PC-9 (cell line): ENCODE measurements at regions of chr12 and their contacts with region 1.

Region 1: DNA sequence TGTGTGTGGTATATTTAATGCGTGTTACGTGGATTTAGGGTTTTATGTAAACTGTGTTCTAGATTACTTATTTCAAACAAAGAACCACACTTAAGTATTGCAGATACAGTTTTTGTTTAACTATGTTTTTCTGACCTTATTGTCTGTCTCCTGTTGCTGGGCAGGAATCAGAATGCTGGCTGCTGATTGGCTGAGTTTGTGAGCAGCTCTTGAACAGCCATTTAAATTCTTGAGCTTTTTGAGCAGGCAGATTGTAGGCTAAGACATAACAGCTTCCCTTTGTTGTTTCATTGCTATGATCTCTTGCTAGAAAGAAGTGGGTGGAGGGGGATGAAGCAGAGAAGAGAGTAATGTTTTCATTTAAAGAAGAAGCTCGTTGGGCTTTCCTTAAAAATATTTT is 52.2 kb downstream of the ATF7IP start:
- DNase-seq: peak in 1 of 2 experiments; percentile 61
- H3K4me3 ChIP-seq: no peak overlapping the region
- H3K27ac ChIP-seq: no peak overlapping the region
- H3K4me1 ChIP-seq: no peaks in the 10 kb centered on the region; the same call in 1 of the 2 replicates
- H3K27me3 ChIP-seq: no peaks in the 10 kb centered on the region
- CTCF ChIP-seq: no peak

Region 2: DNA sequence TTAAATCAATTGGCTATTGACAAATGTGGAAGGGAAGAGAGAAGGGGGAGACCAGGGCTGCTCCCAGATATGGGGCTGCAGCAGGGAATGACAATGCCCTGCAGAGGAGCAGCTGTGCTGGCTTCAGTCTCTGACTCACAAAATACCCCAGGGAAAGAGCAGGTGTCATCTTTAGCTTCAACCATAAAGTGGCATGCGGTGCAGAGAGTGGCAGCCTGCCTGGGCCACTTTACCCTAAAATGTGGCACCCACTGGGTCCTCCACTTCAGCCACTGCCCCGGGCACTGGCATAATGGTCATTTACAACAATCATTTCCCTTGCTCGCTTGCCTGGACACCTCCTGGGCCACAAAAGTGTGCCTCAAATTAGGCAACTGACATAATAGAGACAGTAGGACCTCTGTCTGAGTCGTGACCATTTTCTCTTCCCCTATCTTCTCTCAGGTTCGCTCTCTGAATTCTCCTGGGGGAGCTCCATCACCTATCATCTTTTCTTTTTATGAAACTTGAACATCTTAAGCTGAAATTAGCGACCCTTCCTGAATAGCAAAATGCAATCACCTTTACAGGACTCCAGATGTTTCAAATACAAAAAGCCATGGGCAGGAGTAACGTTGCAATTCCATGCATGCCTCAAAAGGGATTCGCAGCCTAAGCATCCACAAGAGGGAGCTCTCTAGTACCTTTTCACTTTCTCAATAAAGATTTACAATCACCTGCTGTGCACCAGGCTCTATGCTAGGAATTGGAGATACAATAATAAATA is 232.1 kb before region 1 on chr12:
- CTCF ChIA-PET with region 1: interaction called, 3 read pairs
- POLR2A ChIA-PET with region 1: no interaction called
- intact Hi-C with region 1: loop called (anchors 1 kb)
- DNase-seq: peak; percentile 39 to 48
- H3K4me3 ChIP-seq: no peak overlapping the region
- H3K27ac ChIP-seq: no peak overlapping the region
- H3K4me1 ChIP-seq: 0 out of 2 replicates have a peak, but pooled peaks cover 7% of the 10 kb centered on the region
- H3K27me3 ChIP-seq: no peaks in the 10 kb centered on the region
- CTCF ChIP-seq: peak; percentile 83

Region 3: GRCh38 chr12:14257734-14258574 is 159.8 kb before region 1 on chr12:
- CTCF ChIA-PET with region 1: no interaction called
- POLR2A ChIA-PET with region 1: no interaction called
- intact Hi-C with region 1: loop called (anchors 1 kb)
- DNase-seq: peak; percentile 86 to 95
- H3K4me3 ChIP-seq: no peak overlapping the region
- H3K27ac ChIP-seq: peak overlapping the region; percentile 93
- H3K4me1 ChIP-seq: peaks cover 40% of the 10 kb centered on the region
- H3K27me3 ChIP-seq: no peaks in the 10 kb centered on the region
- CTCF ChIP-seq: no peak

Region 4: DNA sequence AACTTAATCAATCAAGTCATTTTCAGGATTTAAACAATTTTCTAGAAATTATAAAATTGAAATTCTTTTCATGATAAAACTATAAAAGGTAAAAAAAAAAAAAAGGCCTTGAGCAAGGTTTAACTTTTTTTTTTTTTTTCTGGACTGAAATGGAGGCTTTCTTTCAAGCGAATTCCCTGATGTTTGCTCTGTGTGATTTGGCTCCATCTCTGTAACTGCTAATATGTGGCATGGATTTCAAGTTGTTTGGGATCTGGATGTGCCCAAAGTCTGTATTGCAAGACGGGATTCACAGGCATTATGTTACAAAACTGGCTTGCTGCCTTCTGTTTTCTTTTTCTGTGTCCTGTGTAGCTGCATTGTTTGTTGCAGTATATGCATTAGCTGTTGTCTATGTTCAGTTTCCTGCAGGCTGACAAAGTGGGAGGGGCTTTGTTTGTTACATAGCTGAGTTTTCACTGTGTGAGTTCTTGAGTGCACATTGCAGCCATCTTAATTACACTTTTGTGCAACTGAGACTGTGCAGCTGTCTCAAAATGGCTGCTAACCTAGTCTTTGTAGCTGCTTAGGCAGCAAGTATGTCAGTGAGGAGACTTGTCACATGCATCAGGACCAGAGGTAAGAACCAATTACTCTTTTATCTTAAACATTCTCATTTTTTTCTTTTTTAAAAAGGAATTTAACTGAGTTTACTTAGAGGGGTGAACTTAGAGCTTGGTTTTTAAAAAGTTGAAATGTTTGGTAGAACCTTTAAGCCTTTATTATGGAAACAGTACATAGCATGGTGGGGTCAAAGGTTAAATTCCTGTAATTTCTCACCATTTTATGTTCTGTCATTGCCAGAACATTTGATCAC is 32.7 kb before region 1 on chr12:
- CTCF ChIA-PET with region 1: interaction called, 4 read pairs
- POLR2A ChIA-PET with region 1: interaction called, 4 read pairs
- intact Hi-C with region 1: loop called (anchors 2 kb)
- DNase-seq: peak; percentile 63 to 75
- H3K4me3 ChIP-seq: no peak overlapping the region
- H3K27ac ChIP-seq: no peak overlapping the region
- H3K4me1 ChIP-seq: 0 out of 2 replicates have a peak, but pooled peaks cover 8% of the 10 kb centered on the region
- H3K27me3 ChIP-seq: no peaks in the 10 kb centered on the region
- CTCF ChIP-seq: no peak

Region 5: DNA sequence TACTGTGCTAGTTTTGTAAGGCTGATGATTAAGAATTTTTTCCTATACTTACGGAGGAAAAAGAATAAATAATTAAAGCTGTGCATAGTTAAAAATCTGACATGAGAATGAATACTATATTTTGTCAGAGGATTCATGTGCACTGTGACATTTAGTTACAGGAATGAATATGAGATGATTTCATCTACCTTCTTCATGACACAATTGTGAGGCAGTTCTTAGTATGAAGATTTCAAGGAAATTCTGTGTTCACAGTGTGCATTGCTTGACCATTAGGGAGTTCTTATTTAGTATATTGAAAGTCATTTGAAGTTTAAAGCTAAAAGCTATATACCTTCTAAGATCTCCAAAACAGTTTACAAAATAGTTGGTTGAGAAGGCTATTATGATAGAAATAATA is 17.9 kb after region 1 on chr12:
- CTCF ChIA-PET with region 1: no interaction called
- POLR2A ChIA-PET with region 1: no interaction called
- intact Hi-C with region 1: no loop called
- DNase-seq: no peak
- H3K4me3 ChIP-seq: no peak overlapping the region
- H3K27ac ChIP-seq: no peak overlapping the region
- H3K4me1 ChIP-seq: no peaks in the 10 kb centered on the region
- H3K27me3 ChIP-seq: no peaks in the 10 kb centered on the region
- CTCF ChIP-seq: no peak